PC-3 (cell line): ENCODE measurements at regions of chr12 and their contacts with region 1.

Region 1: DNA sequence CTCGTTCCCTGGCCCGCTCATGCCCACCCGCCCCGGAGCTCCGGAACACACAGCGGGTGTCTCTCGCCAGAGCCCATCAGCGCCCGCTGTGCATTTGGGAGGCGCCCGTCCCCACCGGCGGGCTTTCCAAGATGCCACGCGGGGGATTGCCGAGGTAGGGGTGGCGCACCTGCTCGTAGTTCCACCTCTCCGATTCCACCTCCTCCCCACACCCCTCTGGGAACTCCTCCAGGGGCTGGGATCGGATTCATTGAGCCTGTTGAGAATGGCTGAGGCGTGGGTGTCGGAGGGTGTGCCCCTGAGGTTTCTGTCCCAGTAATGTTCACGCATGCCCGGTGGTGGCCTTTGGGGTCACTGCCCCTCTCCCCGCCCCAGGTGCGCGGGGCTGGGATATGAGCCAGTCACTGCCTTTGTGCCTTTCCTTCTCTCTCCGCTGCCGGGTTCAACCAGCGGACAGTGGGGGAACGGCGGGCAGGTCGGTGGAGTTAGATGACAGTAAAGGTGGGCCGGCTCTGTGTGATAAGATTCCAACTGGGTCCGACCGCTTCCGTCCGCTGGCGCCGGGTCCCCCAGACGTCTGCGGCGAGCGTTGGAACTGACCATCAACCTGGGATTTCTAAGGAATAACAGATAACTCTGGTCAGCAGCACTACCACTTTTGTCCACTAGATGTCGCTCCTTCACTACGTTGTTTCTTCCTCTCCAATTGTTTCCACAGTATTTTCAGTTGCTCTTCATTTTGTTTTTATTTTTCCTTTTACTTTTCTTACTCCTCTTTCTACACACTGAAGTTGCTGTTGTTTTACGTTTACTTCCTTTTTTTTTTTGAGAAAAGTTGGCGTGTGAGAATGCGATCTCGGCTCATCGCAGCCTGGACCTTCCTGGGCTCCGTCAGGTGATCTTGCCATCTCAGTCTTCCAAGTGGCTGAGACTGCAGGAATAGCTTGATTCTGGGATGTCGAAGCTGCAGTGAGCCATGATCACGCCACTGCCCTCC is 178.1 kb upstream of the ALG10B start:
- DNase-seq: peak; percentile 96
- ATAC-seq: peak; percentile 78
- H3K4me3 ChIP-seq: peak overlapping the region; percentile 77
- H3K27ac ChIP-seq: 0 out of 2 replicates have a peak overlapping the region, but pooled peaks have one; percentile 18
- H3K4me1 ChIP-seq: peaks cover 11% of the 10 kb centered on the region
- H3K27me3 ChIP-seq: no peaks in the 10 kb centered on the region
- CTCF ChIP-seq: peak; percentile 94

Region 2: DNA sequence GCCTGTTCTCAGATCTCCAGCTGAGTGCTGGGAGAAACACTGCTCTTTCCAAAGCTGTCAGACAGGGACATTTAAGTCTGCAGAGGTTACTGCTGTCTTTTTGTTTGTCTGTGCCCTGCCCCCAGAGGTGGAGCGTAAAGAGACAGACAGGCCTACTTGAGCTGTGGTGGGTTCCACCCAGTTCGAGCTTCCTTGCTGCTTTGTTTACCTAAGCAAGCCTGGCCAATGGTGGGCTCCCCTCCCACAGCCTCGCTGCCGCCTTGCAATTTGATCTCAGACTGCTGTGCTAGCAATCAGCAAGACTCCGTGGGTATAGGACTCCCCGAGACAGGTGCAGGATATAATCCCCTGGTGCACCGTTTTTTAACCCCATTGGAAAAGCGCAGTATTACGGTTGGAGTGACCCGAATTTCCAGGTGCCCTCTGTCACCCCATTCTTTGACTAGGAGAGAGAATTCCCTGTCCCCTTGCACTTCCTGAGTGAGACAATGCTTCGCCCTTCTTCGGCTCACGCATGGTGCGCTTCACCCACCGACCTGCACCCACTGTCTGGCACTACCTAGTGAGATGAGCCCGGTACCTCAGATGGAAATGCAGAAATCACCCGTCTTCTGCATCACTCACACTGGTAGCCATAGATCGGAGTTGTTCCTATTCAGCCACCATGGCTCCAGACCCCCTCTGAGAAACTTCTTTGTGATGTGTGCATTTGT is 472.3 kb before region 1 on chr12:
- CTCF ChIA-PET with region 1: no interaction called
- POLR2A ChIA-PET with region 1: no interaction called
- intact Hi-C with region 1: loop called (anchors 5 kb)
- DNase-seq: no peak
- ATAC-seq: no peak
- H3K4me3 ChIP-seq: no peak overlapping the region
- H3K27ac ChIP-seq: no peak overlapping the region
- H3K4me1 ChIP-seq: no peaks in the 10 kb centered on the region
- H3K27me3 ChIP-seq: no peaks in the 10 kb centered on the region
- CTCF ChIP-seq: no peak

Region 3: DNA sequence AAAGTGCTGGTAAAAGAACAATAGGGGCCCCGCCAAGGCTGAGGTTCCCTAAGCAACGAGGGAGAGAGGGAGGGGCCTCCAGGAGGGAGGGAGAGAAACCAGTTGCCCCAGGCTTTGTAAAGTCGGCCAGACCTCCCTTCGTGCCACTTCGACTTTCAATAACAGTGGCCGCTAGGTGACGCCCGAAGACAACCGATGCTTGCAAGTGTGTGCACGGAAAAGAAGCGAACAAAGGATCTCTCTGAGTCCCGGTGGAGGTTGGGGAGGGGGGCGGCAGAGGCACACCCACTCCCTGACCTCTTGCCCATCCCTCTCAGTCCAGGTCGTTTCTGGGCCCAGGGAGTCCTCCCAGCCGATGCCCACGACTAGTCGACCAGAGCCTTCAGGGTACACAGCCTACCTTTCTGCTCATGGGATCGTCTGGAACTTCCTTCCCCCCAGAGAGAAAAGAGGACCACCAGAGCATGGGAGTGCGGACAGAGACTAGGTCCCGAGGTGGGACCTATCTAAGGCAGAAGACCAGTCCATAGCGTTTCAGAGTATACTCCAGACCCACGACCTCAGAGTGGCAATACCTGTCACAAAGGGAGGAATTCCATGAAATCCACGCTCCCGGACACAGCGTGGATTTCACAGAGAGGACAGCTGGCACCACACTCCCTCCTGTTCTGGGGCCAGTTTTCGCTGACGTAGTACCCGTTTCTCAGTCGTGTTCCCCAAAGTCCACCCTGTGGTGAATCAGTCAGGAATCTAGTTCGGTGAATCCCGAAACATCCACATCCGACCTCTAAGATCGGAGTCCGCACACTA is 84.7 kb before region 1 on chr12:
- CTCF ChIA-PET with region 1: interaction called, 3 read pairs
- POLR2A ChIA-PET with region 1: interaction called, 7 read pairs
- intact Hi-C with region 1: loop called (anchors 1 kb)
- DNase-seq: peak; percentile 97
- ATAC-seq: peak; percentile 45
- H3K4me3 ChIP-seq: peak overlapping the region; percentile 61
- H3K27ac ChIP-seq: no peak overlapping the region
- H3K4me1 ChIP-seq: peaks cover 28% of the 10 kb centered on the region
- H3K27me3 ChIP-seq: no peaks in the 10 kb centered on the region
- CTCF ChIP-seq: peak; percentile 93

Region 4: DNA sequence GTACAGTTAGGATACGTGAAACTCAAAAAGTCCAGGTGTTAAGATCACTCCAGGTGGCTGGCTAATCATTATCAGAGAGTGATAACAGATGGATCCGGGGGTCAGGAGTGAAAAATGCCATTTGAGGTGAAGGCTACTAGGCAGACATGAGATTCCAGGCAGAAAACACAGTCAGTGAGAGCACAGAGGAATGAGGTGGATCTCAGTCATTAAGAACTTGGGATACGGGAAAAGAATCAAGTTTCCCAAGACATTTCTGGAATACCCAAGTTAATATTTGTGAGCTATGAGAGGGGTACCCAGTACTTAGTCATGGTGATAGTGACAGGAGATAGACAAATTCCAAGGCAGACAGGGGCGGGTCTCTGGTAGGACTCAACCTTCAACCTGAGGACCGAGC is 83.5 kb after region 1 on chr12:
- CTCF ChIA-PET with region 1: no interaction called
- POLR2A ChIA-PET with region 1: no interaction called
- intact Hi-C with region 1: loop called (anchors 5 kb)
- DNase-seq: no peak
- ATAC-seq: no peak
- H3K4me3 ChIP-seq: no peak overlapping the region
- H3K27ac ChIP-seq: no peak overlapping the region
- H3K4me1 ChIP-seq: peaks cover 6% of the 10 kb centered on the region; the same call in 1 of the 2 replicates
- H3K27me3 ChIP-seq: no peaks in the 10 kb centered on the region
- CTCF ChIP-seq: no peak

Region 5: GRCh38 chr12:38282886-38283285 is 144.4 kb after region 1 on chr12:
- CTCF ChIA-PET with region 1: no interaction called
- POLR2A ChIA-PET with region 1: no interaction called
- intact Hi-C with region 1: loop called (anchors 5 kb)
- DNase-seq: peak; percentile 98
- ATAC-seq: peak; percentile 99
- H3K4me3 ChIP-seq: peak overlapping the region; percentile 11; the same call in 1 of the 2 replicates
- H3K27ac ChIP-seq: peak overlapping the region; percentile 91
- H3K4me1 ChIP-seq: peaks cover 25% of the 10 kb centered on the region
- H3K27me3 ChIP-seq: no peaks in the 10 kb centered on the region
- CTCF ChIP-seq: no peak

Region 6: GRCh38 chr12:38316391-38317129 is 178.0 kb after region 1 on chr12 and contains the start of gene ALG10B:
- CTCF ChIA-PET with region 1: interaction called, 8 read pairs
- POLR2A ChIA-PET with region 1: no interaction called
- intact Hi-C with region 1: loop called (anchors 1 kb)
- DNase-seq: peak; percentile 97
- ATAC-seq: peak; percentile 99
- H3K4me3 ChIP-seq: peak within 1 kb of the TSS; percentile 97
- H3K27ac ChIP-seq: peak within 1 kb of the TSS; percentile 67
- H3K4me1 ChIP-seq: peaks cover 17% of the 10 kb centered on the region
- H3K27me3 ChIP-seq: no peaks in the 10 kb centered on the region
- CTCF ChIP-seq: peak; percentile 72
- total RNA-seq, gene ALG10B: 9.4 and 18.7 TPM in 2 replicates

Region 7: DNA sequence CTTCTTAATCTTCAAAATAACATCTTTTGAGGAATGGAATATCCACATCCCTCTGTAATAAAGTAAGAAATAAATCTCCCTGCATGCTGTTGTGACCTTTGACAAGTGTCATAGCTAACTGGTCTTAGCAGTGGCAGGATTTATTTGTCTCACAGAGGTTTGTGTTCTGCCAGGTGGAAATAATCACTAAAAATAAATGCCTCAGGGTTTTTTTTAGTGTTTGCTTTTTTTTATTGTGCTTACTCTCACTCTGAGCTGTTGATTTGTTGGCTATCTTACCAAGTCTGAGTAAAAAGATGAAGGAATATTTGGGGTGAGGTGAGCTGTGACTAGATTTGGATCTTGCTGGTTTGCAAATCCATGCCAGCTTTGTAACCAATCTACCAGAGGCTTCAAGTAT is 463.4 kb after region 1 on chr12:
- CTCF ChIA-PET with region 1: no interaction called
- POLR2A ChIA-PET with region 1: no interaction called
- intact Hi-C with region 1: loop called (anchors 10 kb)
- DNase-seq: peak; percentile 82
- ATAC-seq: peak; percentile 97
- H3K4me3 ChIP-seq: no peak overlapping the region
- H3K27ac ChIP-seq: peak overlapping the region; percentile 17; the same call in 1 of the 2 replicates
- H3K4me1 ChIP-seq: peaks cover 14% of the 10 kb centered on the region
- H3K27me3 ChIP-seq: no peaks in the 10 kb centered on the region
- CTCF ChIP-seq: no peak